Activated CD4-positive, alpha-beta memory T cell treated with anti-CD3 and anti-CD28 coated beads for 36 hours (primary cell): ENCODE measurements at regions of chr10 and their contacts with region 1.

Region 1: GRCh38 chr10:80132299-80133139 is at the start of gene PLAC9:
- DNase-seq: no peak
- H3K4me3 Mint-ChIP-seq: peak within 1 kb of the TSS; percentile 4
- H3K27ac Mint-ChIP-seq: no peak within 1 kb of the TSS
- H3K4me1 Mint-ChIP-seq: peaks cover 3% of the 10 kb centered on the region
- H3K27me3 Mint-ChIP-seq: peaks cover 25% of the 10 kb centered on the region
- total RNA-seq, gene PLAC9: not detected

Region 2: GRCh38 chr10:79995979-79996634 is 136.4 kb before region 1 on chr10:
- CTCF ChIA-PET with region 1: no interaction called
- POLR2A ChIA-PET with region 1: no interaction called
- intact Hi-C with region 1: no loop called
- DNase-seq: no peak
- H3K4me3 Mint-ChIP-seq: no peak overlapping the region
- H3K27ac Mint-ChIP-seq: no peak overlapping the region
- H3K4me1 Mint-ChIP-seq: no peaks in the 10 kb centered on the region
- H3K27me3 Mint-ChIP-seq: peaks cover 14% of the 10 kb centered on the region

Region 3: GRCh38 chr10:80055760-80056159 is 76.8 kb before region 1 on chr10:
- CTCF ChIA-PET with region 1: interaction called, 54 read pairs
- POLR2A ChIA-PET with region 1: no interaction called
- intact Hi-C with region 1: loop called (anchors 1 kb)
- DNase-seq: no peak
- H3K4me3 Mint-ChIP-seq: no peak overlapping the region
- H3K27ac Mint-ChIP-seq: no peak overlapping the region
- H3K4me1 Mint-ChIP-seq: no peaks in the 10 kb centered on the region
- H3K27me3 Mint-ChIP-seq: no peaks in the 10 kb centered on the region